ENCODE measurements at regions of chr2 and their contacts with region 1.

Region 1: GRCh38 chr2:157777427-157777826 is 98.7 kb downstream of the ACVR1 start:
- DNase-seq: peak; percentile 60

Region 2: GRCh38 chr2:157876066-157876787 is 98.8 kb after region 1 on chr2 and contains the start of gene ACVR1:
- in situ Hi-C with region 1: loop called (anchors 5 kb)
- DNase-seq: peak; percentile 96
- total RNA-seq, gene ACVR1: 6.1 and 7.2 TPM in 2 replicates

Region 3: GRCh38 chr2:158024288-158024898 is 247.0 kb after region 1 on chr2:
- in situ Hi-C with region 1: loop called (anchors 25 kb)
- DNase-seq: peak; percentile 60